CD14-positive monocyte (primary cell): ENCODE measurements at regions of chr19 and their contacts with region 1.

Region 1: GRCh38 chr19:41959056-41960053 is at the start of gene RABAC1:
- DNase-seq: peak; percentile 70 to 84 (median 77)
- H3K4me3 ChIP-seq: peak within 1 kb of the TSS; percentile 66 to 91 (median 91)
- H3K4me3 Mint-ChIP-seq: peak within 1 kb of the TSS; percentile 82 to 93
- H3K27ac ChIP-seq: peak within 1 kb of the TSS; percentile 70 to 84
- H3K27ac Mint-ChIP-seq: peak within 1 kb of the TSS; percentile 71 to 93 (median 87)
- H3K4me1 ChIP-seq: peaks cover 21 to 25% of the 10 kb centered on the region in 2 donors
- H3K4me1 Mint-ChIP-seq: peaks cover 23% of the 10 kb centered on the region
- H3K27me3 ChIP-seq: no peaks in the 10 kb centered on the region
- H3K27me3 Mint-ChIP-seq: peaks cover 0 to 6% (median 1%) of the 10 kb centered on the region in 3 donors
- CTCF ChIP-seq: no peak
- polyA plus RNA-seq, gene RABAC1: 126 to 234 (median 202) TPM

Region 2: GRCh38 chr19:41859618-41860418 is 99.5 kb before region 1 on chr19 and contains the start of gene RPS19:
- intact Hi-C with region 1: loop called (anchors 5 kb)
- DNase-seq: peak; percentile 96 to 99 (median 98)
- H3K4me3 ChIP-seq: peak within 1 kb of the TSS; percentile 59 to 95 (median 68)
- H3K4me3 Mint-ChIP-seq: peak within 1 kb of the TSS; percentile 92 to 100
- H3K27ac ChIP-seq: peak within 1 kb of the TSS; percentile 86 to 90
- H3K27ac Mint-ChIP-seq: peak within 1 kb of the TSS; percentile 99 to 100 (median 100)
- H3K4me1 ChIP-seq: peaks cover 35 to 43% of the 10 kb centered on the region in 2 donors
- H3K4me1 Mint-ChIP-seq: peaks cover 45% of the 10 kb centered on the region
- H3K27me3 ChIP-seq: no peaks in the 10 kb centered on the region
- H3K27me3 Mint-ChIP-seq: peaks cover 0 to 3% (median 2%) of the 10 kb centered on the region in 3 donors
- CTCF ChIP-seq: peak; percentile 87
- polyA plus RNA-seq, gene RPS19: 1,234 to 2,117 (median 1,424) TPM

Region 3: DNA sequence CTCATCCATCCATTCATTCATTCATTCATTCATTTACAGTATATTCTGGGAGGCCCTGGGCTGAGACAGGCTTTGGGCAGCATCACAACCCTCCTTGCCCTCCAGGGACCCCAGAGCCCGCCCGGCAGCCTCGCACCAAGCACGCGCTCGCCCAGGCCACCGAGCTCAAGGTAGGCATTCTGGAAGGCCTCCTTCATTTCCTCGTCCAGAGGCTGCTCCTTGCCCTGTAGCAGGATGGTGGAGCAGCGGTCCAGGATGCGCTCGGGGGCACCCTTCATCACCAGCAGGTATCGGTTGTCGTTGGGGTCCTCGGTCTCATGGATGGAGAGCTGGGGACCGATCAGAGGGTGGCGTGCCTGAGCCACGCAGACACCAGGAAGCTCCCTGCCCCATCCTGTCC is 19.1 kb after region 1 on chr19:
- intact Hi-C with region 1: no loop called
- DNase-seq: no peak
- H3K4me3 ChIP-seq: no peak overlapping the region
- H3K4me3 Mint-ChIP-seq: no peak overlapping the region
- H3K27ac ChIP-seq: no peak overlapping the region
- H3K27ac Mint-ChIP-seq: peak overlapping the region in 1 of 7 donors; percentile 66
- H3K4me1 ChIP-seq: no peaks in the 10 kb centered on the region
- H3K4me1 Mint-ChIP-seq: no peaks in the 10 kb centered on the region
- H3K27me3 ChIP-seq: no peaks in the 10 kb centered on the region
- H3K27me3 Mint-ChIP-seq: peaks cover 0 to 3% (median 1%) of the 10 kb centered on the region in 3 donors
- CTCF ChIP-seq: no peak

Region 4: DNA sequence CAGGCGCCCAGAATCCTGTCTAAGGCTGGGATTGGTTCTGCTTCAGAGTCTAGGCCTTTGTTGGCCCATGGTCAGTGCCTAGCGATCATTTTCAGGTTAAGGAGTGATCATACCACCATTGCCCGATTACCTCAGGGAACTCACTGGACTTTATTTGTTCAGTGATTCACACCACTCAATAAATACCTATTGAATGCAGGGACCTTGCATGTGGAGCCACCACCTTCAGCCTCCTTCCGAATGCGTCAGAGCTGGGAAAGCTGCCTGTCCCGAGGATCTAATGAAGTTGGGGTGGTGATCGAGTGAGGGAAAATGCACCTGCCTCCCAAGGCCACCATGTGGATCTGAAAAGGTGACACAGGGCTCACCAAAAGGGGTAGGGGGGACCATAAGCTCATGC is 212.9 kb after region 1 on chr19:
- intact Hi-C with region 1: no loop called
- DNase-seq: no peak
- H3K4me3 ChIP-seq: no peak overlapping the region
- H3K4me3 Mint-ChIP-seq: no peak overlapping the region
- H3K27ac ChIP-seq: no peak overlapping the region
- H3K27ac Mint-ChIP-seq: no peak overlapping the region
- H3K4me1 ChIP-seq: peaks cover 10 to 21% of the 10 kb centered on the region in 2 donors
- H3K4me1 Mint-ChIP-seq: peaks cover 17% of the 10 kb centered on the region
- H3K27me3 ChIP-seq: peaks cover 15 to 23% of the 10 kb centered on the region in 2 donors
- H3K27me3 Mint-ChIP-seq: peaks cover 29 to 33% (median 32%) of the 10 kb centered on the region in 3 donors
- CTCF ChIP-seq: no peak